ENCODE measurements at regions of chr10 and their contacts with region 1.

Region 1: DNA sequence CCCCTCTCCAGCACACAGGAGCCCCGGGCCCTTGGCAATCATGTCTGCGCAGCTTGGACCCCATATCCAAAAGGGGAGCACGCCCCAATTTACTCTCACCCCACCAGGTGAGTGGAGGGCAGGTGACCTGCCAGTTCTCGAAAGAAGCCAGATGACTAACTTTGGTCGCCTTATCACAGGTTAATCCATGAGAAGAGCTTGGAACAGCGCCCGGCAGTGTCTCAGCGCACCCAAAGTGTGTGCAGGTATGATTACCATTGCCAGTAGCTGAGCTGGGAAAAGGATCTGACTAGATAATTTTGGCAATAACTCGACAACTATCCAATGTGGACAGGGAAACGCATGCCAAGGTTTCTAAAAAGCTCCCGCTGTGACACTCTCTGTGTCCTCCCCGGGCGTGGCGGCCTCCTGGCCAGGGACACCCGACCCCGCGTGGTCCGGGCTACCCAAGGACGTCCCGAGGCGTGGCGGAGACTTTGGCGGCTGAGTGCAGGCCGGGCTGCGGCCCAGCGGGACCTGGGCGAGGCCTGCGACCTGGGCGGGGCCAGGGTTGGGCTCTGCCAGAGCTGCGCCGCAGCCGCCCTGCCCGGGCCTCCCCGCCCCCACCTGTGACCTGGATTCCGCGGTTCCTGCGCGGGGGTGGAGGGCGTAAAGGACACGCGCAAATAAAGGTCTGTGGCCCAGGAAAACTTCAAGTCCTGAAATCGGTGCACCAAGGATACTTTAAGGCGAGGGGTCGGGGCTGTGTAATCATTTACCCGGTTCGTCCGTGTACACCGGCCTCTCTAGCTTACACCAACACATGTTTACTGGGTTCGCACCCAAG is 13.7 kb upstream of the WAPL start:
- DNase-seq: peak; percentile 75
- ATAC-seq: peak; percentile 87
- H3K4me3 Mint-ChIP-seq: peak overlapping the region; percentile 77
- H3K27ac Mint-ChIP-seq: no peak overlapping the region
- H3K4me1 Mint-ChIP-seq: peaks cover 22% of the 10 kb centered on the region
- H3K27me3 Mint-ChIP-seq: peaks cover 28% of the 10 kb centered on the region
- CTCF ChIP-seq: no peak

Region 2: GRCh38 chr10:86489071-86489810 is 46.0 kb before region 1 on chr10:
- CTCF ChIA-PET with region 1: no interaction called
- POLR2A ChIA-PET with region 1: no interaction called
- DNase-seq: no peak
- ATAC-seq: no peak
- H3K4me3 Mint-ChIP-seq: no peak overlapping the region
- H3K27ac Mint-ChIP-seq: no peak overlapping the region
- H3K4me1 Mint-ChIP-seq: no peaks in the 10 kb centered on the region
- H3K27me3 Mint-ChIP-seq: no peaks in the 10 kb centered on the region
- CTCF ChIP-seq: no peak

Region 3: DNA sequence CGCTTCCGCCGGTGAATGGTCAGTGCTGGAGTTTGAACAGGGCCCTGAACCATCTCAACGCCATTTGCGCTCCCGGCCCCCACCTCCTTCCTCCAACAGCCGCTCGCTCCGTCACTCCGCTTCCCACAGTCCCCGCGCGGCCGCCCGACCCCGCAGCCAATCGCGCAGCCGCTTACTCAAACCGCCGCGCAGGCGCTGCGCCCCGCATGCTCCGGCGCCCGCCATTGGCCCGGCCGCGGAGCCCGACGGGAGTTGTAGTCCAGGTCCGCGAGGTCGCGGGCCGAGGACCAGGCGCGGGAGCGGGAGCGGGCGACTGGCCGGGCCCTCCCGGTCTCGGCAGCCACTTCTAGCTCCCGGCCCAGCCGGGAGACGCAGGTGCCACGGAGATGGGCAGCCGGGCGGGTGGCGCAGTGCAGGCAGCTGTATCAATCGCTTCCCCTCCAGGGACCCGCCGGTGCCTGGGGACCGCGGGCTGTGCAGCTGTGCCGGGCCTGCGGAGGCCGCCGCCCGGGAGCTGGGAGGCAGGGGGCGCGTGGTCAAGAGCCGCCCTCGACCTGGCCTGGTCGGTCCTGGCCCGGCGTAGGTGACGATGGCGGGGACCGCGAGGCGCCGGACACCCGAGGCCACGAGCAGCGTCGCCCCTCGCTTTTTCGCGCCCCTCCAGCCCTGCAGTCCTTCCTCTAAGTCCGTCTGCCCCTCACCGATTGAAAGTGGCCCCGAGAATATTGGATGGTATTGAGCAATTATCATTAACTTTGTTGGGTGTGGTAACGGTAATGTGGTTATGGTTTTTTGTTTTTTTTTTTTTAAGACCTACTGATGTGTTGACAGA is 13.4 kb before region 1 on chr10 and contains the start of gene WAPL:
- CTCF ChIA-PET with region 1: interaction called, 13 read pairs
- POLR2A ChIA-PET with region 1: interaction called, 13 read pairs
- DNase-seq: peak; percentile 95
- ATAC-seq: peak; percentile 93
- H3K4me3 Mint-ChIP-seq: peak within 1 kb of the TSS; percentile 95
- H3K27ac Mint-ChIP-seq: peak within 1 kb of the TSS; percentile 86
- H3K4me1 Mint-ChIP-seq: peaks cover 31% of the 10 kb centered on the region
- H3K27me3 Mint-ChIP-seq: no peaks in the 10 kb centered on the region
- CTCF ChIP-seq: no peak
- total RNA-seq, gene WAPL: 41.7 to 48.0 TPM (median 41.8 TPM) in 3 replicates